Right ventricle myocardium inferior (tissue), 1 donor: ENCODE measurements at regions of chr14 and their contacts with region 1.

Region 1: DNA sequence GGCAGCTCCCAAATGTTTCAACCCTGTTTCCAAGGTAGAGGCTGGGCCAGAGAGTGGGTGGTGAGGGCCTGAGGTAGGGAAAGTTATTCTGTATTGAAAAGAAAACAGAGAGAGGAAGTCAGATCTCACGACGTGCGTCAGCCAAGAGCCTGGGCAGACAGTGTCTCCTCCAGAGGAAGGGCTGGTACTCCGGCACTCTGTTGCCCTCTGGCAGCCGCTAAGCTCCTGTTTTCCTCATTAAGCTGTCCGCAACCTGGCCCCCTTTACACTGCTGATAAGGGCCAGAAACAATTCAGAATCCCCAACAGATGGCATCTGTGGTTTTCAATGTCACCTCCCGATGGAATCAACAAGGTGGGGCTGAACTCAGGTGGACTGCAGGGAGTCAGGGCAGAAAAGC is 26.0 kb upstream of the LTBP2 start:
- DNase-seq: no peak
- ATAC-seq: no peak

Region 2: GRCh38 chr14:74663884-74664283 is 25.8 kb after region 1 on chr14:
- intact Hi-C with region 1: loop called (anchors 2 kb)
- DNase-seq: no peak
- ATAC-seq: peak; percentile 84